ENCODE measurements at regions of chr10 and their contacts with region 1.

Region 1: DNA sequence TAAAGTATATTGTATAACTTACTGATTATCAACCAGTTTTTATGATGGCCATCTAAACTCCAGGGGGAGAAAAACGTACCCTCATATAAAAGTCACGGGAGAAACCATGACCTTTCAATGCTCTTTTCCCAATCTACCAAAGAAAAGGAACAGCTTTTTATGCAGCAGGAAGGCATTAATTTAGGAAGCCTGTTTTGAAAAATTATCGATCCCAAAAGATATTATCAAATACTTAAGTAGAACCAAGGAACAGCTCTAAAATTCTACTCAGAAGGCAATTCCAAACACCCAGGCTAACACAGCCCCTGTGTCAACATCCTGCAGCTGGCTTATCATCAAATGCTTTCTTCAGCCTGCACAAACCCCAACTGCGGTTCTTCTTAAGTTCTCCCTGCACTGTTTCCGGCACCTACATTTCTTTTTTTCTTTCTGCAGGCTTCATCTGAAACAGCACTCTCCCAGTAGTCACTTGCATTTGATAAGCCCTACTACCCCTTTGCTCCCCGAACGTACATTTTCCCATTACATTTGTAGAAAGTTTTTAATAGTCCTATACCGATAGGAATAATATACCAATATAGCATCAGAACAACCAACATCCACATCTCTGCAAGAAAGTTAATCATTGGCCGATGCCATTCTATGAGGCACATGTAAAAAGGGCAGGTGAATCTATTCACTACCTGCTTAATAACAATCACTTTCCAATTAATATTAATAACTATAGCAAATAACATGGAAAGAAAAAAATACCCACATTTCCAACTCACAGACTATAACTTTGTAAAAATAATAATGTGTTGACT is 47.9 kb downstream of the PIP4K2A start:
- DNase-seq: no peak
- ATAC-seq: peak; percentile 90
- H3K4me3 Mint-ChIP-seq: peak overlapping the region; percentile 90
- H3K27ac Mint-ChIP-seq: peak overlapping the region; percentile 91
- H3K4me1 Mint-ChIP-seq: peaks cover 68% of the 10 kb centered on the region
- H3K27me3 Mint-ChIP-seq: no peaks in the 10 kb centered on the region

Region 2: DNA sequence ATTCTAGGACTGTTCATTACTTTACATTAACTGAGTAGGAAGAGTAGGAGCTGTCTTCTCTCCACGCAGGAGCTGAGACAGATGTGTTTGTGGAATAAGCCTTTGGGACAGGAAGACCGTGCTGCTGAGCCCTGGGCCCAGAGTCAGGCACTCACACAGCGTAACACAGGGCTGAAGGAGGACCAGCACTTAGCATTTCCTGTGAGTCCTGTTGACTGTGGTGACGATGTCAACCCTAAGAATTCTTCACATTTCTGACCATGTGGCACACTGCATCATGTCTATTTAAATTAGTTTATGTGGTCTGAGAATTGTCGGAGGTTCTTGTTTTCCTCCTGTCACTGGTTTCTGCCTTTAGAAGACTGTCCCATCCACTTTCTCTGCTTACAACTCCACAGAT is 69.4 kb before region 1 on chr10:
- POLR2A ChIA-PET with region 1: no interaction called
- DNase-seq: no peak
- ATAC-seq: peak; percentile 55
- H3K4me3 Mint-ChIP-seq: peak overlapping the region; percentile 7
- H3K27ac Mint-ChIP-seq: peak overlapping the region; percentile 70
- H3K4me1 Mint-ChIP-seq: peaks cover 50% of the 10 kb centered on the region
- H3K27me3 Mint-ChIP-seq: no peaks in the 10 kb centered on the region

Region 3: GRCh38 chr10:22655311-22655981 is 11.0 kb before region 1 on chr10:
- POLR2A ChIA-PET with region 1: interaction called, 12 read pairs
- DNase-seq: no peak
- ATAC-seq: peak; percentile 24
- H3K4me3 Mint-ChIP-seq: peak overlapping the region; percentile 73
- H3K27ac Mint-ChIP-seq: peak overlapping the region; percentile 90
- H3K4me1 Mint-ChIP-seq: peaks cover 83% of the 10 kb centered on the region
- H3K27me3 Mint-ChIP-seq: no peaks in the 10 kb centered on the region

Region 4: DNA sequence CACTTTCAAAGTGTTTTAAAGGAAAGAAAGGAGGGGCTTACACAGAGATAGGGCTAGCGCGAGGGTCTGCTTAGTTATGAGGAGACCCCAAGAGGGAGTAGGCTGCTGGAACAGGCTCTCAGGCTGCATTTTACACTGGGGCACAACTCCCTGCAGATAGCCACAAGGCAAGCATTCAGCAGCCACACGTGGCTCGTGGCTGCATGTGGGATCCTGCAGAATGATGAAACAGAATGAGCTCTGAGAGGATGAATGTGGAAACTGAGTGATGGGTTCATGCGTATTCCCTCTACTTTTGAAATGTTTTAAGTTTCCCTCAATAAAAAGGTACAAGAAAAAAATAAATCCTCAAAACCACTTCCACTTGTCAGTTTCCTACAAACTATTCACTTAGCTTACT is 10.8 kb after region 1 on chr10:
- POLR2A ChIA-PET with region 1: interaction called, 21 read pairs
- DNase-seq: no peak
- ATAC-seq: no peak
- H3K4me3 Mint-ChIP-seq: peak overlapping the region; percentile 65
- H3K27ac Mint-ChIP-seq: peak overlapping the region; percentile 87
- H3K4me1 Mint-ChIP-seq: peaks cover 74% of the 10 kb centered on the region
- H3K27me3 Mint-ChIP-seq: no peaks in the 10 kb centered on the region

Region 5: GRCh38 chr10:22682237-22683139 is 16.0 kb after region 1 on chr10:
- POLR2A ChIA-PET with region 1: interaction called, 21 read pairs
- DNase-seq: peak; percentile 69
- ATAC-seq: peak; percentile 54
- H3K4me3 Mint-ChIP-seq: peak overlapping the region; percentile 71
- H3K27ac Mint-ChIP-seq: peak overlapping the region; percentile 96
- H3K4me1 Mint-ChIP-seq: peaks cover 80% of the 10 kb centered on the region
- H3K27me3 Mint-ChIP-seq: no peaks in the 10 kb centered on the region

Region 6: GRCh38 chr10:22693371-22693784 is 26.9 kb after region 1 on chr10:
- POLR2A ChIA-PET with region 1: no interaction called
- DNase-seq: no peak
- ATAC-seq: no peak
- H3K4me3 Mint-ChIP-seq: no peak overlapping the region
- H3K27ac Mint-ChIP-seq: no peak overlapping the region
- H3K4me1 Mint-ChIP-seq: peaks cover 55% of the 10 kb centered on the region
- H3K27me3 Mint-ChIP-seq: no peaks in the 10 kb centered on the region

Measured in activated naive CD8-positive, alpha-beta T cell treated with anti-CD3 and anti-CD28 coated beads, Interleukin-2, amount 10 ng/mL, durations not matched to agents 7 days and 5 days (primary cell).